ENCODE measurements at regions of chr12 and their contacts with region 1.

Region 1: GRCh38 chr12:48151103-48151771 is 6.1 kb downstream of the ASB8 start:
- DNase-seq: no peak
- CTCF ChIP-seq: no peak

Region 2: GRCh38 chr12:48197971-48198671 is 46.9 kb after region 1 on chr12:
- CTCF ChIA-PET with region 1: no interaction called
- POLR2A ChIA-PET with region 1: interaction called, 11 read pairs
- DNase-seq: peak; percentile 96
- CTCF ChIP-seq: no peak